Activated CD8-positive, alpha-beta T cell treated with anti-CD3 and anti-CD28 coated beads, Interleukin-2, amount 10 ng/mL, durations not matched to agents 7 days and 5 days (primary cell): ENCODE measurements at regions of chr2 and their contacts with region 1.

Region 1: GRCh38 chr2:64914735-64915509 is 74.3 kb upstream of the SLC1A4 start:
- DNase-seq: no peak
- ATAC-seq: no peak
- H3K4me3 Mint-ChIP-seq: no peak overlapping the region
- H3K27ac Mint-ChIP-seq: no peak overlapping the region
- H3K4me1 Mint-ChIP-seq: peaks cover 41% of the 10 kb centered on the region
- H3K27me3 Mint-ChIP-seq: no peaks in the 10 kb centered on the region

Region 2: DNA sequence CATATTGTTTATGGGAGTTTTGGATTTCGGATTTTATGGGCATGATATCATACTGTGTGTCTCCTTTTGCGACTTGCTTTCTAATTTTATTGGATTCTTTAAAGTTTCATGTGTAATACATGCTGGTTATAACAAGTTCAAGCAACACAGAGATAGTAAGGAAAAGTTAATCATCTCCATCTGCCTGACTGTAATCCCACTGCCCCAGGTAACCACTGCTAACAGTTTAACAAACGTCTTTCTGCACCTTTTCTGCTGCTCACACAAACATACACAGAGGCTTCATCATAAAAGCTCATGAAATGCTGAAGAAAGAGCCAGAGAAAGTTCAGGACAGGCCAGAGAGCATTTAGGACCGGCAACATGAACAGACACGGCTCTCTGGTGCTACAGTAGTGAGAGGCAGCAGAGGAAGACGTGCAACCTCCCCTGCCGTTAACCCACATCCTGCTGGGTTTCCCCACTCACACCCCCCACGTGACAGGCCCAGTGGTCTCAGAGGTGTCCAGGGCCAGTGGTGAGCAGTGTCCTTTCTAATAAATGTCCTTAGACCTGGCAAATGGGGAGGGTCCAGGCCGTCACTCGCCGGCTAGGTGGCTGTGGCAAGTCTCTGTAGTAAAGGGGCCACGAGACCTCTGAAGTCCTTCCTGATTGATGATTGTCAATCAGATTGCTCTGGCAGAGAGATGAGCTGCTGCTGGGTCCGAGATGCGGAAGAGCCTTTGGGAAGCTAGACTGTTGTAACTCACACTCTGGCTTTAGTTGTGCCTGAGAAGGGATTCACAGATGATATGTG is 31.2 kb after region 1 on chr2:
- CTCF ChIA-PET with region 1: interaction called, 98 read pairs
- POLR2A ChIA-PET with region 1: interaction called, 25 read pairs
- DNase-seq: peak; percentile 86
- ATAC-seq: peak; percentile 97
- H3K4me3 Mint-ChIP-seq: peak overlapping the region; percentile 71
- H3K27ac Mint-ChIP-seq: peak overlapping the region; percentile 96
- H3K4me1 Mint-ChIP-seq: peaks cover 58% of the 10 kb centered on the region
- H3K27me3 Mint-ChIP-seq: no peaks in the 10 kb centered on the region

Region 3: DNA sequence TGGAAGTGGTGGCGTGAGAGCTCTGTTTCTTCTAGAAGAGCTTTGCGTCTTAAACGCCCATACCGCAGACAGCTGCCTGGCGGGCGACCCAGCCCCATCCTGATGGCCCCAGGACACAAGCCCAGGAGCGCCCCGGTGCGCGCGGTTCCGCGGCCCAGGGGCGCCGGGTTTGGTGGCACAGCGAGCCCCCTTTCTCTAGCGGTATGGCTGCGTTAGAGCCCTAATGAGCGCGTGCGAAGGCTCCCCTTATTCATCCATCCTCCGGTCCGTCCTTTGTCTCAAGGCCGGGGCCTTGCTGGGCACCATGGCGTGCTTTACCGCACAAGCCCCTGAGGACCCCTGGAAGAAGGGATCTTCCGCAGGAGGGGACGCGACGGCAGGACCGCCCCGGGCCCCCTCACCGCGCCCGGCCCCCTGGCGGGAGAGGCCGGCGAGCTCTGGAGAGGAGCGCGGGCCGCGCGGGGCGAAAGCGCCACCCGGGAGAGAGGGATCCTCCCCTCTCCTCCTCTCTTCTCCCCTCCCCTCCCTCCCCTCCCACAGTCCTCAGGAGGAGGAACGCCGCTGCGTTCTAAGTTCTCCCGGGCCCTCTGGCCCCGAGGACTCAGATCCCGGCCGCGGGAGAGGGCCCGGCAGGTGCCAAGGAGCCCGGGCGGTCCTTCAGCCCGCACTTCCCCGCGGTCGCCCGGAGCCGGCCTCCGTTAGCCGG is 73.7 kb after region 1 on chr2:
- CTCF ChIA-PET with region 1: interaction called, 104 read pairs
- POLR2A ChIA-PET with region 1: interaction called, 28 read pairs
- DNase-seq: peak; percentile 87
- ATAC-seq: peak; percentile 47
- H3K4me3 Mint-ChIP-seq: peak overlapping the region; percentile 74
- H3K27ac Mint-ChIP-seq: peak overlapping the region; percentile 76
- H3K4me1 Mint-ChIP-seq: peaks cover 66% of the 10 kb centered on the region
- H3K27me3 Mint-ChIP-seq: peaks cover 14% of the 10 kb centered on the region

Region 4: DNA sequence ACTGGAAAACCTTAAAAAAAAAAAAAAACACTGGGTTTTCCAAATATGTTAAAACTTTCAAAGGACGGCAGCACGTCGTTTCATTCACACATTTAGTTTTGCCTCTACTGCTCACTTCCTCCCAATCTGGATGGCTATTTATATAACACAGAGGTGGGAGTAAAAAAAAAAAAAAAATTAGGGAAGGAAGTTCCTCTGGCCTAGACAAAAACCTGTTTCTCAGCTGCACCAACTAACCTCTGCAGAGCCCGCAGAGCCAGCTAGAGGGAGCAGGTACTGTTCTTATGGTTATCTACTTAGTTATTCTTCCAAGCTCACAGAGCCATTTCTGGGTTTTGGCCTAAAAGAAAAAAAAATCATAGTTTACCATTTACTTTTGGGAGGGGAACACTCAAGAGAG is 102.4 kb after region 1 on chr2:
- CTCF ChIA-PET with region 1: interaction called, 12 read pairs
- POLR2A ChIA-PET with region 1: no interaction called
- DNase-seq: no peak
- ATAC-seq: no peak
- H3K4me3 Mint-ChIP-seq: no peak overlapping the region
- H3K27ac Mint-ChIP-seq: no peak overlapping the region
- H3K4me1 Mint-ChIP-seq: peaks cover 10% of the 10 kb centered on the region
- H3K27me3 Mint-ChIP-seq: no peaks in the 10 kb centered on the region

Region 5: DNA sequence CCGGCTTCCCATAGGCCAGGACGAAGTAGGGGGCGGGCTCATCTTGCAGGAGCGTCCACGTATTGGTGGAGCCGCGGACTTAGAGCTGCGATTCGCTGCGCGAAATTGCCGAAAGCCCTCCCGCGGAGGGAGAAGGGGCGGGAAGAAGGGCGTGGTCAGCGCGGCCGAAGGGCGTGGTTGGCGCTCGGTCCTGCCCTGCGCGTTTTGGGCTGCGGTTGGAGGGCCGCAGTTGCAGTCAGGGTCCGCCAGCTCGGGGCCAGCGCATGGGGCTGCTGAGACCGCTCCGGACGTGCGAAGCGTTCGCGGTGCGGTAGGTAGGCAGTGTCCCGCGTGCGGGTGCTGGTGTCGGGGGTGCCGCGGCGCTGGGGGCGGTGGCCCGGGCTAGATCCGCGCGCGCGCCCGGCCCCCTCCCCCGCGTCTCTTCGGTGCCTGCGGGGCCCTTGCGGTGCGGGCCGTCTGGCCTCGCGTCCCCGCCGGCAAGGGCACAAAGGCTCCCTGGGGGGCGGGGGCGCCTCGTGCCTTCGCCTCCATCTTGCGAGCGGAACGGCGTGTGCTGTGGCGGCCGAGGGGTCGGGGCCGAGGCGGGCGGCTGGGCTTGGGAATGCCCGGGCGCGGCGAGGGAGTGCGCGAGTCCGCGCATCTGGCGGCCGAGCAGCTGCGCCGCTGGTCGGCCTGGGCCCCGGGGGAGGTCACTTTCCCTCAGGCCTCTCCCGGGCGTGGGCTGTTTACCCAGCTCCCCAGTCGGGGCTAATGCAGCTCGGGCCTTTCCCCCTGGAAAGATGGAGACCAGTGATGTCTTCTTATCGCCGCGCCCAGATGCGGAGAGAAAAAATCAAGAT is 141.5 kb after region 1 on chr2 and contains the start of gene CEP68:
- CTCF ChIA-PET with region 1: interaction called, 23 read pairs
- POLR2A ChIA-PET with region 1: interaction called, 3 read pairs
- DNase-seq: peak; percentile 98
- ATAC-seq: peak; percentile 95
- H3K4me3 Mint-ChIP-seq: peak within 1 kb of the TSS; percentile 95
- H3K27ac Mint-ChIP-seq: peak within 1 kb of the TSS; percentile 88
- H3K4me1 Mint-ChIP-seq: peaks cover 58% of the 10 kb centered on the region
- H3K27me3 Mint-ChIP-seq: no peaks in the 10 kb centered on the region
- total RNA-seq, gene CEP68: 8.1 to 9.7 TPM